ENCODE measurements at regions of chr5 and their contacts with region 1.

Region 1: GRCh38 chr5:136686192-136686872 is 321.0 kb upstream of the TRPC7 start:
- DNase-seq: peak; percentile 42 to 84
- H3K4me3 ChIP-seq: no peak overlapping the region
- H3K27ac ChIP-seq: no peak overlapping the region
- H3K4me1 ChIP-seq: peaks cover 5% of the 10 kb centered on the region; the same call in 1 of the 2 replicates
- H3K27me3 ChIP-seq: no peaks in the 10 kb centered on the region
- CTCF ChIP-seq: peak; percentile 83

Region 2: DNA sequence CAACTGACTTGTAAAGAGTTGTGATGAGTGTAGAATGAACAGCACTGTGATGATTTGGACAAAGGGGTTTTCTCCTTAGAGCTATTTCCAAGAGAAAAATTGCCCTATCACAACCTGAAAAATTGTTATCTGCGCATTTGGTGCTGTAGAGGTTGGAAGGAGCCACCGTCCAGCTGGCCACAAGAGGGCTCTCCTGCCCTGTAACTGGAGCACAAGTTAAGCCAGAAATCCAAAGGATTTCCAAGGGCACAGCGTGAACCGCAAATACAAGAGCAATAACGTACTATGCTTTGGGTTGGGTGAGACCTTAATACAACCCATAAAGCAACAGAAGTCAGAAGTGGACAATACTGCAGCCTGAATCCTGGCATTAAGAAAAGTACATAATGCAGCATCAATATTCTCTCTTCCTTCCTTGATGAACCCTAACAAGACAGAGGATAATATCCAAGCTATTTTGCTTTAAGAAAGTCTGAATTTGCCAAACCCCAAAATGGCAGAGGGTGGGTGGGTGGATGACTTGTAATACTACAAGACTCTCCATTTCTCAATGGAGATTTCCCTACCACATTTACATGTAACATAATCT is 436.6 kb before region 1 on chr5:
- CTCF ChIA-PET with region 1: no interaction called
- POLR2A ChIA-PET with region 1: no interaction called
- intact Hi-C with region 1: loop called (anchors 1 kb)
- DNase-seq: peak in 1 of 2 experiments; percentile 49
- H3K4me3 ChIP-seq: no peak overlapping the region
- H3K27ac ChIP-seq: no peak overlapping the region
- H3K4me1 ChIP-seq: no peaks in the 10 kb centered on the region
- H3K27me3 ChIP-seq: peaks cover under 1% of the 10 kb centered on the region; the same call in 1 of the 2 replicates
- CTCF ChIP-seq: peak; percentile 89

Region 3: DNA sequence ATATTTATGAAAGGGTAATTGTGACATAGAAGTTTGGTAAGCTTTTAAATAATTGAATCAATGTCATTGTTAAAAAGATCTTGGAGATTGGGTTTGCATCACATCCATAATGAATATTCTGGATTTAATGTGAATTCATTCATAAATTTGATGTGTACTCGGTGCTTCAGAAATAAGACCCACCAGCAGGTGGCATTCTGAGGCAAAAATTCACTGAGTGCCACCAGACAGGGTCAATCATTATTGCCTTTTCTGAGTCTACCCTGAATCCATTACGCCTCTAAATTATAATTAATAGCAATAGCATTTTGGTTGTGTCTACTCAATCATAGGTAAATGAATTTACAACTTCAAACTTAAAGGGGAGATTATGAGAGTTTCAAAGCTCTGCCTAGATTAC is 322.0 kb before region 1 on chr5:
- CTCF ChIA-PET with region 1: no interaction called
- POLR2A ChIA-PET with region 1: no interaction called
- intact Hi-C with region 1: loop called (anchors 2 kb)
- DNase-seq: no peak
- H3K4me3 ChIP-seq: no peak overlapping the region
- H3K27ac ChIP-seq: no peak overlapping the region
- H3K4me1 ChIP-seq: no peaks in the 10 kb centered on the region
- H3K27me3 ChIP-seq: no peaks in the 10 kb centered on the region
- CTCF ChIP-seq: peak; percentile 78

Region 4: DNA sequence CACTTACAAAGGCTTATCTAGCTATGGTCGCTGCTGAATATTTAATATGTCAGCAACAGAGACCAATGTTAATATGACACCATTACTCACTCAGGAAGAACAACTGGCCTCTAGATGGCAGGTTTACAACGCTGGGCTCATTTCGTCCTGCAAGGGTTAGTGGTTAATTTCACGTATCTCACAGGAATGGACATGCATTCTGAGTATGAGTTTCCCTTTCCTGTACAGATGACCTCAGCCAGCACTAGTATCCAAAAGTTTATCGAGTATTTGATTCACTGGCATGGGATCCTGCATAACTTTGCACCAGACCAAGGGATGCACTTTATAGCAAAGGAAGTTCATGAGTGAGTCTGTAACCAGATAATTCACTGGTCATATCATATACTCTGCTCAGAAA is 312.3 kb before region 1 on chr5:
- CTCF ChIA-PET with region 1: no interaction called
- POLR2A ChIA-PET with region 1: no interaction called
- intact Hi-C with region 1: loop called (anchors 1 kb)
- DNase-seq: peak; percentile 10 to 38
- H3K4me3 ChIP-seq: no peak overlapping the region
- H3K27ac ChIP-seq: no peak overlapping the region
- H3K4me1 ChIP-seq: no peaks in the 10 kb centered on the region
- H3K27me3 ChIP-seq: no peaks in the 10 kb centered on the region
- CTCF ChIP-seq: peak; percentile 44; the same call in 1 of the 2 replicates

Region 5: GRCh38 chr5:136446565-136446964 is 239.8 kb before region 1 on chr5:
- CTCF ChIA-PET with region 1: no interaction called
- POLR2A ChIA-PET with region 1: no interaction called
- intact Hi-C with region 1: no loop called
- DNase-seq: no peak
- H3K4me3 ChIP-seq: no peak overlapping the region
- H3K27ac ChIP-seq: no peak overlapping the region
- H3K4me1 ChIP-seq: no peaks in the 10 kb centered on the region
- H3K27me3 ChIP-seq: no peaks in the 10 kb centered on the region
- CTCF ChIP-seq: no peak

Region 6: DNA sequence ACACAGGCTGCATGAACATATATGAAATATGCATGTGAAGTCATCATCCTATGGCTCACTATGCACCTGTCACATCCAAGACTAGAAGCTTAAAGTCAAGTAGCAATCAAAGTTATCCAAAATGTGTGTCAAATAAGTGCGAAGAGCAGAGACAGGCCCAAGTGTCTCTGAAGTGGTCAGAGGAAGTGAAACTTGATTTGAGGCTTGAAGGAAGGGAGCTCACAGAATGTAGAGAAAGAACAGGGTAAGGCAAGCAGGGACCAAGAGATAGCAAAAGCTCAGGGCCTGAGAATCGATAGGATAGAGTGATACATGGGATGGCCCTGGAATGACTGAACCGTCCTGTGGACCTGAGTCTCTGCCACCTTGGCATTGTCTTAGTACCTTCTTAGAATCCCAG is 46.7 kb before region 1 on chr5:
- CTCF ChIA-PET with region 1: no interaction called
- POLR2A ChIA-PET with region 1: no interaction called
- intact Hi-C with region 1: no loop called
- DNase-seq: no peak
- H3K4me3 ChIP-seq: no peak overlapping the region
- H3K27ac ChIP-seq: no peak overlapping the region
- H3K4me1 ChIP-seq: no peaks in the 10 kb centered on the region
- H3K27me3 ChIP-seq: no peaks in the 10 kb centered on the region
- CTCF ChIP-seq: no peak

Region 7: GRCh38 chr5:136655429-136655828 is 30.9 kb before region 1 on chr5:
- CTCF ChIA-PET with region 1: no interaction called
- POLR2A ChIA-PET with region 1: no interaction called
- intact Hi-C with region 1: no loop called
- DNase-seq: peak; percentile 19 to 95
- H3K4me3 ChIP-seq: no peak overlapping the region
- H3K27ac ChIP-seq: peak overlapping the region; percentile 50
- H3K4me1 ChIP-seq: peaks cover 32% of the 10 kb centered on the region
- H3K27me3 ChIP-seq: no peaks in the 10 kb centered on the region
- CTCF ChIP-seq: no peak

Region 8: GRCh38 chr5:136780522-136780921 is 94.2 kb after region 1 on chr5:
- CTCF ChIA-PET with region 1: no interaction called
- POLR2A ChIA-PET with region 1: no interaction called
- intact Hi-C with region 1: no loop called
- DNase-seq: no peak
- H3K4me3 ChIP-seq: no peak overlapping the region
- H3K27ac ChIP-seq: no peak overlapping the region
- H3K4me1 ChIP-seq: no peaks in the 10 kb centered on the region
- H3K27me3 ChIP-seq: no peaks in the 10 kb centered on the region
- CTCF ChIP-seq: no peak